Naive thymus-derived CD4-positive, alpha-beta T cell (primary cell): ENCODE measurements at regions of chr4 and their contacts with region 1.

Region 1: GRCh38 chr4:119628308-119629141 is at the start of gene PDE5A:
- DNase-seq: peak; percentile 51 to 81 (median 71)
- ATAC-seq: peak; percentile 88
- H3K4me3 ChIP-seq: peak within 1 kb of the TSS; percentile 70
- H3K4me3 Mint-ChIP-seq: peak within 1 kb of the TSS; percentile 91 to 97 (median 94)
- H3K27ac ChIP-seq: peak within 1 kb of the TSS; percentile 45
- H3K27ac Mint-ChIP-seq: peak within 1 kb of the TSS; percentile 4 to 94 (median 71)
- H3K4me1 ChIP-seq: peaks cover 6 to 7% of the 10 kb centered on the region in 2 donors
- H3K4me1 Mint-ChIP-seq: peaks cover 7 to 27% (median 23%) of the 10 kb centered on the region in 7 donors
- H3K27me3 ChIP-seq: no peaks in the 10 kb centered on the region
- H3K27me3 Mint-ChIP-seq: peaks cover 5 to 73% (median 11%) of the 10 kb centered on the region in 5 donors
- total RNA-seq, gene PDE5A: 0.21 to 1.5 (median 0.65) TPM

Region 2: GRCh38 chr4:118981839-118982381 is 646.6 kb before region 1 on chr4:
- CTCF ChIA-PET with region 1: no interaction called
- POLR2A ChIA-PET with region 1: no interaction called
- intact Hi-C with region 1: loop called (anchors 1 kb)
- DNase-seq: peak in 8 of 9 donors; percentile 14 to 55 (median 38)
- ATAC-seq: peak; percentile 88
- H3K4me3 ChIP-seq: no peak overlapping the region
- H3K4me3 Mint-ChIP-seq: no peak overlapping the region
- H3K27ac ChIP-seq: no peak overlapping the region
- H3K27ac Mint-ChIP-seq: no peak overlapping the region
- H3K4me1 ChIP-seq: no peaks in the 10 kb centered on the region
- H3K4me1 Mint-ChIP-seq: peaks cover 0 to 2% (median 0%) of the 10 kb centered on the region in 7 donors
- H3K27me3 ChIP-seq: no peaks in the 10 kb centered on the region
- H3K27me3 Mint-ChIP-seq: peaks cover 0 to 18% (median 0%) of the 10 kb centered on the region in 5 donors

Region 3: DNA sequence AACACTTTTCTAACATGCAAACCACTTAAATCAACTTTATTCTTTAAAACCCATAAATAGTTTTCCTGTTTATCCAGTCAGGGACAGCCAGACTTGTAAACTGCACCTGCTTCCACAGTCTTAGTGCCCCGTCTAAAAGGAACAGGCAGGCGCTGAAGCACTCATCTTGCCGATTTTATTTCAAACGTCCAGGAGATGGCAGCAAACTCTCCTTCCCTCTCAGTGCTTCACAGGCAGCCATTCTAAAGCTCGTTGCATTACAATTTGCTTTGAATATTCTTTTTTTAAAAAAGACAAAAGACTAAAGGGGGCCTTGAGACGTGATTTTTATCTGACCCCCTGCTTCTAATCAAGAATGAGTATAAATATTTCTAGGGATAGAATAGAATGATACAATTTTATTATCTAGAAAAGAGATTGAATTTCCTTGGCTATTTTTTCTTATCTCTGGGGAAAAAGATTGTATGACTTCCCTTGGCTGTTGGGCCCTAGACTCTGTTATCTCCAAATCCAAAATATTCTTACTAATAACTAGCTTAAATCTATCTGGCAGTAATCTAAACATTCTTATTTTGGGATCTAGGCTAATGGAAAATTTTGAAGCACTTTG is 586.5 kb before region 1 on chr4:
- CTCF ChIA-PET with region 1: no interaction called
- POLR2A ChIA-PET with region 1: no interaction called
- intact Hi-C with region 1: loop called (anchors 2 to 5 kb)
- DNase-seq: peak in 7 of 9 donors; percentile 30 to 72 (median 61)
- ATAC-seq: peak; percentile 94
- H3K4me3 ChIP-seq: no peak overlapping the region
- H3K4me3 Mint-ChIP-seq: peak overlapping the region in 1 of 10 donors; percentile 25
- H3K27ac ChIP-seq: no peak overlapping the region
- H3K27ac Mint-ChIP-seq: no peak overlapping the region
- H3K4me1 ChIP-seq: no peaks in the 10 kb centered on the region
- H3K4me1 Mint-ChIP-seq: peaks cover 0 to 12% (median 0%) of the 10 kb centered on the region in 7 donors
- H3K27me3 ChIP-seq: no peaks in the 10 kb centered on the region
- H3K27me3 Mint-ChIP-seq: peaks cover 0 to 3% (median 0%) of the 10 kb centered on the region in 5 donors

Region 4: DNA sequence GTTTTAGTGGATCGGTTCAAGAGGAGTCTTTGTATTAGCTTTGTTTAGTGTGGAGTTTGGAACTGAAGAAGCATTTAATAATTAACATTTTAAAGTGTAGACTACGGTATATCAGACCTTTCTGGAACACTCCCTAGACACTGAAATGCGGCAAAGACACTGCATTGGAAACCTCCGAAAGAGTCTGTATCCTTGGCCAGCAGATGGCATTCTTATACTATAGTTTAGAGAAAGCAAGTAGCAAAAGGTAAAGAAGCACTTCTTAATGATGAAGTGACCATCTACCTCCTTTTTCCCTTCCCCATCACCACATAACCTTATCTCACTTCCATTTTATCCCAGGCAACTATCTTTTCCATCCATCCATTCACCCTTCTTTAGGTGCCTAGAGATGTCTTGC is 314.2 kb before region 1 on chr4:
- CTCF ChIA-PET with region 1: interaction called, 7 read pairs
- POLR2A ChIA-PET with region 1: no interaction called
- intact Hi-C with region 1: loop called (anchors 1 kb)
- DNase-seq: peak in 7 of 9 donors; percentile 37 to 72 (median 61)
- ATAC-seq: peak; percentile 80
- H3K4me3 ChIP-seq: no peak overlapping the region
- H3K4me3 Mint-ChIP-seq: no peak overlapping the region
- H3K27ac ChIP-seq: no peak overlapping the region
- H3K27ac Mint-ChIP-seq: peak overlapping the region in 2 of 9 donors; percentile 1 to 17
- H3K4me1 ChIP-seq: no peaks in the 10 kb centered on the region
- H3K4me1 Mint-ChIP-seq: peaks cover 0 to 2% (median 0%) of the 10 kb centered on the region in 7 donors
- H3K27me3 ChIP-seq: no peaks in the 10 kb centered on the region
- H3K27me3 Mint-ChIP-seq: peaks cover 0 to 40% (median 8%) of the 10 kb centered on the region in 5 donors

Region 5: GRCh38 chr4:119559044-119559647 is 69.4 kb before region 1 on chr4:
- CTCF ChIA-PET with region 1: no interaction called
- POLR2A ChIA-PET with region 1: no interaction called
- intact Hi-C with region 1: loop called (anchors 2 to 5 kb)
- DNase-seq: no peak
- ATAC-seq: no peak
- H3K4me3 ChIP-seq: no peak overlapping the region
- H3K4me3 Mint-ChIP-seq: no peak overlapping the region
- H3K27ac ChIP-seq: no peak overlapping the region
- H3K27ac Mint-ChIP-seq: no peak overlapping the region
- H3K4me1 ChIP-seq: no peaks in the 10 kb centered on the region
- H3K4me1 Mint-ChIP-seq: no peaks in the 10 kb centered on the region
- H3K27me3 ChIP-seq: no peaks in the 10 kb centered on the region
- H3K27me3 Mint-ChIP-seq: no peaks in the 10 kb centered on the region

Region 6: DNA sequence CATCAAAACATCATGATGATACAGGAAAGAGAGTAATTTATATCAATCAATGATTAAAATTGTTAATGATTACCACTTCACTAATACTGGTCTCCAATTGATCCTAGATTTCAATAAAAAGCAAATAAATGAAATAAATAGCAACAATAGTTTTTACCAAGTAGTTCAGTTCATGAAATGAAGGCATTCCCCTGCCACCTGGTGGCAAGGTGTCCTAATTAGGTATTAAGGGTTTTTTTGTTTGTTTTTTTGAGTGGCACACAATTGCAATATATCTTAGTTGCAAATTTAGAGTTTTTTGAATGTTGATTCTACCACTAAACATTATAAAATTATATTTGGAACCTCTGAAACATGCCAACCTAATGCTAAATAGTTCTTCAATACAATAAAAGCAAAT is 157.4 kb after region 1 on chr4:
- CTCF ChIA-PET with region 1: no interaction called
- POLR2A ChIA-PET with region 1: no interaction called
- intact Hi-C with region 1: loop called (anchors 2 kb)
- DNase-seq: no peak
- ATAC-seq: no peak
- H3K4me3 ChIP-seq: no peak overlapping the region
- H3K4me3 Mint-ChIP-seq: no peak overlapping the region
- H3K27ac ChIP-seq: no peak overlapping the region
- H3K27ac Mint-ChIP-seq: no peak overlapping the region
- H3K4me1 ChIP-seq: no peaks in the 10 kb centered on the region
- H3K4me1 Mint-ChIP-seq: peaks cover 0 to 2% (median 0%) of the 10 kb centered on the region in 7 donors
- H3K27me3 ChIP-seq: no peaks in the 10 kb centered on the region
- H3K27me3 Mint-ChIP-seq: peaks cover 0 to 23% (median 5%) of the 10 kb centered on the region in 5 donors

Region 7: GRCh38 chr4:120049732-120050494 is 421.4 kb after region 1 on chr4:
- CTCF ChIA-PET with region 1: no interaction called
- POLR2A ChIA-PET with region 1: no interaction called
- intact Hi-C with region 1: loop called (anchors 1 kb)
- DNase-seq: peak; percentile 41 to 78 (median 64)
- ATAC-seq: peak; percentile 97
- H3K4me3 ChIP-seq: no peak overlapping the region
- H3K4me3 Mint-ChIP-seq: peak overlapping the region in 7 of 10 donors; percentile 22 to 84 (median 33)
- H3K27ac ChIP-seq: no peak overlapping the region
- H3K27ac Mint-ChIP-seq: peak overlapping the region in 1 of 9 donors; percentile 3
- H3K4me1 ChIP-seq: no peaks in the 10 kb centered on the region
- H3K4me1 Mint-ChIP-seq: peaks cover 0 to 5% (median 4%) of the 10 kb centered on the region in 7 donors
- H3K27me3 ChIP-seq: no peaks in the 10 kb centered on the region
- H3K27me3 Mint-ChIP-seq: no peaks in the 10 kb centered on the region